ENCODE measurements at regions of chr1 and their contacts with region 1.

Region 1: GRCh38 chr1:23437355-23438030 is 12.9 kb upstream of the TCEA3 start:
- DNase-seq: no peak
- H3K4me3 ChIP-seq: no peak overlapping the region
- H3K27ac ChIP-seq: no peak overlapping the region
- H3K4me1 ChIP-seq: no peaks in the 10 kb centered on the region
- H3K27me3 ChIP-seq: no peaks in the 10 kb centered on the region
- CTCF ChIP-seq: no peak

Region 2: DNA sequence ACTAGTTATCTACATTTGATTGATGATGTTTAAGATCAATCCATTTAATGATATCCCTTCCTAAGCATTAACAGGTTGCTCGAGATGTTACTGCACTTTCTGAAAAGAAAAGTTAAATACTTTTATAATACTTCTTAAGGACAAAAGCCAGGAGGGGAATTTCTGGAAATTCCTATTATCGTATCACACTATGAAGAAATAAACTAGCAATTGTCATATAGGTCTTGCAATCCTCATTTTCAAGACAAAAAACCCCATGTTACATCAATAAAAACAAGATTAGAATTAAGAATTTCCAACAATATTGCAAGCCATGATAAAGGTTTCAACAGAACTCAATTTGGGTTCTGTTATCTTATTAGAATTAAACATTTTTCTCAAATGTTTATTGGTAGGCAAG is 140.6 kb before region 1 on chr1:
- CTCF ChIA-PET with region 1: no interaction called
- POLR2A ChIA-PET with region 1: no interaction called
- intact Hi-C with region 1: no loop called
- DNase-seq: no peak
- H3K4me3 ChIP-seq: no peak overlapping the region
- H3K27ac ChIP-seq: no peak overlapping the region
- H3K4me1 ChIP-seq: no peaks in the 10 kb centered on the region
- H3K27me3 ChIP-seq: no peaks in the 10 kb centered on the region
- CTCF ChIP-seq: no peak

Region 3: DNA sequence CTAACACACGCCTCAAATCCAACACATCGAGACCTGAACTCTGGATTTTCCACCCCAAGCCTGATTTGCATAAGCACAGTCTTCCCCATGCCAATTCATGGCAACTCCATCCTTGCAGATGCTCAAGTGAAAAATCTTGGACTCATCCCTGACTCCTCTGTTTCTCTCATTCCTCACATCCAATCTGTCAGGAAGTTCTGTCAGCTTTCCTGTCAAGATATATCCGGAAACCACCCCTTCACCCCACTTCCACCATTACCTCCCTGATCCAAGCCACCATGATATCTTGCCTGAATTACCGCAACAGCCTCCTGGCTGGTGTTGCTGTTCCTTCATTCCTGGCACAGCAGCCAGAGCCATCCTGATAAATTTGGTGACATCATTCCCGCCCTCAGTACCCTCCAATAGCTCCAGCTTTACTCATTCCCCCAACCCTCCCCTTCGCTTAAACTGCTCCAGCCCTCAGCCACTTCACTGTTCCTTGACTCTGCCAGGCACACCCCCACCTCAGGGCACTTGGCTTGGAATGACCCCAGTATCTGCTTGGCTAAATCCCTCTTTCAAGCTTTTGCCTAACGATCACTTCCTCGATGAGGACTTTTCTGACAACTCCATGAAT is 30.4 kb before region 1 on chr1:
- CTCF ChIA-PET with region 1: no interaction called
- POLR2A ChIA-PET with region 1: no interaction called
- intact Hi-C with region 1: no loop called
- DNase-seq: no peak
- H3K4me3 ChIP-seq: no peak overlapping the region
- H3K27ac ChIP-seq: no peak overlapping the region
- H3K4me1 ChIP-seq: peaks cover 24% of the 10 kb centered on the region
- H3K27me3 ChIP-seq: no peaks in the 10 kb centered on the region
- CTCF ChIP-seq: no peak

Region 4: GRCh38 chr1:23425193-23425494 is 12.3 kb before region 1 on chr1:
- CTCF ChIA-PET with region 1: no interaction called
- POLR2A ChIA-PET with region 1: interaction called, 14 read pairs
- intact Hi-C with region 1: no loop called
- DNase-seq: no peak
- H3K4me3 ChIP-seq: no peak overlapping the region
- H3K27ac ChIP-seq: no peak overlapping the region
- H3K4me1 ChIP-seq: no peaks in the 10 kb centered on the region
- H3K27me3 ChIP-seq: no peaks in the 10 kb centered on the region
- CTCF ChIP-seq: no peak

Region 5: DNA sequence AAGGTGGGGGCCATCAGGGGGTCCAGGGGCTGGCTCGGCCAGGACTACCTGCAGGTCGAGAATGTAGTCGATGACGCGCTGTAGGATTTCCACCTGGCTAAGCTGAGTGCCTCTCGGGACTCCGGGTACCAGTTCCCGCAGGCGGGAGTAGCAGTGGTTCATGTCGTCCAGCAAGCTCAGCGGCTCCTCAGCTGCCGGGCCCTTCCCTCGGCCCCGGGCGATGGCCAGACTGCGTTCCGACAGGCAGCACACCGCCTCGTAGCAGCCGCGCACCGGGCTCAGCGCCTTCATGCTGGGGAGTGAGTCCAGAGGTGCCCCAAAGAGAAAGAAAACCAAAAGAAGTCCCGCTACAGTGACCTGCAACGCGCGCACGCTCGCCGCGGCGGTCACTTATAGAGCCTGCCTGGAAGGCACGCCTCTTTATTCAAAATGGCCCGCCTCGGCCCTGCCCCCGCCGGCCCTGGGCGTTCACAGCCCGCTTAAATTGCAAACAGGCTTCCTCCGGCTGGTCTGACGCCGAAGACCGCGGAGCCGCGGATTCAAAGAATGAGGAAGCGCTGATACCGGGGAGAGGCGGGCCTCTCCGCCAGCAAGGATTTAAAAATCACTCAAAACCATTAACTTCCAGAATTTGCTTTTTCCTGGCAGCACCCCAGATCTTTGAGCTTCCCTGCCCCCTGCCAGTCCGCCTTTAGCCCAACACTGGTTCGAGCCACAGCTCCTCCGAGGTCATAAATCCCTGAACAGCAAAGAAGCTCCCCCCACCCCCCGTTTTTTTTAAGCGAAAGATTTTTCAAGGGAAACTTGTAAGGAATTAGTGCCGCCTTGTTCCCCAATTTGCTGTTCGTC is 121.9 kb after region 1 on chr1 and contains the start of gene ID3:
- CTCF ChIA-PET with region 1: no interaction called
- POLR2A ChIA-PET with region 1: no interaction called
- intact Hi-C with region 1: no loop called
- DNase-seq: peak; percentile 87 to 96
- H3K4me3 ChIP-seq: peak within 1 kb of the TSS; percentile 67
- H3K27ac ChIP-seq: peak within 1 kb of the TSS; percentile 96
- H3K4me1 ChIP-seq: peaks cover 42% of the 10 kb centered on the region
- H3K27me3 ChIP-seq: no peaks in the 10 kb centered on the region
- CTCF ChIP-seq: no peak
- total RNA-seq, gene ID3: 10.4 and 24.7 TPM in 2 replicates

Measured in PC-9 (cell line).